H1 (cell line): ENCODE measurements at regions of chr20 and their contacts with region 1.

Region 1: GRCh38 chr20:21808863-21809664 is 103.6 kb downstream of the PAX1 start:
- DNase-seq: peak; percentile 27 to 97
- H3K4me3 ChIP-seq: no peak overlapping the region
- H3K27ac ChIP-seq: no peak overlapping the region
- H3K4me1 ChIP-seq: no peaks in the 10 kb centered on the region
- H3K27me3 ChIP-seq: peaks cover 0 to 14% (median 10%) of the 10 kb centered on the region in 4 experiments; a peak in 4 of 7 replicates
- CTCF ChIP-seq: peak; percentile 76 to 88 (median 80)
- EP300 ChIP-seq: peak in 1 of 2 experiments; percentile 42; a peak in 1 of 3 replicates
- POLR2A ChIP-seq: no peak
- RAD21 ChIP-seq: peak; percentile 80 to 86

Region 2: GRCh38 chr20:21795955-21796458 is 13.1 kb before region 1 on chr20:
- CTCF ChIA-PET with region 1: interaction called, 14 read pairs
- POLR2A ChIA-PET with region 1: no interaction called
- DNase-seq: no peak
- H3K4me3 ChIP-seq: no peak overlapping the region
- H3K27ac ChIP-seq: no peak overlapping the region
- H3K4me1 ChIP-seq: no peaks in the 10 kb centered on the region
- H3K27me3 ChIP-seq: no peaks in the 10 kb centered on the region
- CTCF ChIP-seq: peak; percentile 34 to 62 (median 48)
- EP300 ChIP-seq: no peak
- POLR2A ChIP-seq: no peak
- RAD21 ChIP-seq: peak; percentile 33 to 59; a peak in 3 of 4 replicates

Region 3: DNA sequence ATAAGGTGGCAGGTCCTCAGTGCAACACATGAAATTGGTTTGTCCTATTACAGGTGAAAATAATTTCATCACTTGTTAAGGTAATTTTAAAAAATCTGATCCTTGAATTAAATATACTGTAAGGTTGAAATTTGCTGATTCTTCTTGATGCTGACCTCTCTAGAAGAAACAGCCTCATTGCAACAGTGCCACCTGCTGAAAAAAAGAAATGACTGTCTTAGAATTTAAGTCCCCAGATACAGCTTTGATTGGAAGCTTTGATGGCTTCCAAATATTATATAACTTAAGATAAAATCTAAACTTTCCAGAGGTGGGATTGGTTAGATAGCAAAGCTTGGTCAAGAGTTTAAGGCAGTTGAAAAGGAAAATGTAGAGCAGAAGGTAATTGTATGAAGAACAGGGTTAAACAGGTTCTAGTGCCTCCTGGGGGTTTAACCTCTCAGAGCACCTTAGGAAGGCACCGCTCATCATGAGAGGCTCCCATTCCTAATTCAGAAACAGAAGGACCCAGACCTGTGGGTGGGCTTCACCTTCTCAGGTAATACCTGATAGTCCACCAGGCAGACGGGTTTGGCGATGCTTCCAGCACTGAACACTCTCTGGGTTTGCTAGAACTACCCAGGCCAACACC is 297.4 kb after region 1 on chr20:
- CTCF ChIA-PET with region 1: interaction called, 10 read pairs
- POLR2A ChIA-PET with region 1: no interaction called
- DNase-seq: no peak
- H3K4me3 ChIP-seq: no peak overlapping the region
- H3K27ac ChIP-seq: no peak overlapping the region
- H3K4me1 ChIP-seq: no peaks in the 10 kb centered on the region
- H3K27me3 ChIP-seq: no peaks in the 10 kb centered on the region
- CTCF ChIP-seq: peak in 2 of 3 experiments; percentile 33 to 43; a peak in 3 of 4 replicates
- EP300 ChIP-seq: no peak
- POLR2A ChIP-seq: no peak
- RAD21 ChIP-seq: peak; percentile 77 to 84